ENCODE measurements at regions of chr16 and their contacts with region 1.

Region 1: DNA sequence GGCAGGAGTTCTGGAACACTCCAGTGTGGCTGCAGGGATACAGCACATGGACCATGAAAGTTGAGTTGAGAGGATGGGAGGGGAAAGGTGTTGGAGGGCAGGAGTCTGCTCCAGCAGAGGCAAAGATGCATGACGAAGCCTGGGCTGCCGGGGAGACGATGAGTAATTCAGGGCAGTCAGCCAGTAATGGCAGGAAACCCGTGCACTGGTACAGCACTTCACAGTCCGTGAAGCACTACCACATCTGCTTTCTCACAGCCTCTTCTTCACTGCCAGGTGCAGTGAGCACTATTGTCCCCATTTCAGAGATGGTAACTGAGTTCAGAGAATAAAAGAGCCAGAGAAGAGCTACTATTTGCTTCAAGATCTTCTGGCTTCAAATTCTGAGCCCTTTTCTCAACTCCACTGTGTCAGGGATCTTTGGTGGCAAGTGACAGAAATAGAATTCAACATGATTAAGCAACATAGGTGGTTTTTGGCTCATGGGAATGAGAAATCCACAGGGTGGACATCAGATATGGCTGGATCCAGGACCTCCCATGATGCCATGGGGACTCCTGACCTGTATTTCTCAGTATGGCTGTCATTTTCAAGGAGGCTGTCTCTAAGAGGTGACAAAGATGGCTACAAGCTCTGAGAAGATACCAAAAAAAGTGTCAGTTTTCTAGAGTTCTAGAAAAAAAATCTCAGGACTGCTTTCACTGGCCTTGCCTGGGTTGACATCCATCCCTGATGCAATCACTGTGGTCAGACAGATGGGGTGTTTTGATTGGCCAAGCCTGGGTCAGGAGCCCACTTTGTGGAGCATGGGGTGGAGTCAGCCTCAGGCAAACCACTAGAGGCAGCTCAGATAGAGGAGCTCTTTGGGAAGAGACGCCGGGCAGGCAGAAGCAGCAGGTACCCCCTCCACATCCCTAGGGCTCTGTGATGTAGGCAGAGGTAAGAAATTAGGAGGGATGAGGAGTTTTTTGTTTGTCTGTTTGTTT is 24.7 kb downstream of the IL21R start:
- DNase-seq: peak in 8 of 9 experiments; percentile 67 to 89 (median 81)
- ATAC-seq: peak; percentile 87
- H3K4me3 ChIP-seq: no peak overlapping the region
- H3K4me3 Mint-ChIP-seq: no peak overlapping the region
- H3K27ac ChIP-seq: peak overlapping the region in 1 of 2 experiments; percentile 69
- H3K27ac Mint-ChIP-seq: peak overlapping the region; percentile 69
- H3K4me1 ChIP-seq: peaks cover 22% of the 10 kb centered on the region
- H3K4me1 Mint-ChIP-seq: peaks cover 57% of the 10 kb centered on the region
- H3K27me3 ChIP-seq: no peaks in the 10 kb centered on the region
- H3K27me3 Mint-ChIP-seq: no peaks in the 10 kb centered on the region
- CTCF ChIP-seq: no peak

Region 2: DNA sequence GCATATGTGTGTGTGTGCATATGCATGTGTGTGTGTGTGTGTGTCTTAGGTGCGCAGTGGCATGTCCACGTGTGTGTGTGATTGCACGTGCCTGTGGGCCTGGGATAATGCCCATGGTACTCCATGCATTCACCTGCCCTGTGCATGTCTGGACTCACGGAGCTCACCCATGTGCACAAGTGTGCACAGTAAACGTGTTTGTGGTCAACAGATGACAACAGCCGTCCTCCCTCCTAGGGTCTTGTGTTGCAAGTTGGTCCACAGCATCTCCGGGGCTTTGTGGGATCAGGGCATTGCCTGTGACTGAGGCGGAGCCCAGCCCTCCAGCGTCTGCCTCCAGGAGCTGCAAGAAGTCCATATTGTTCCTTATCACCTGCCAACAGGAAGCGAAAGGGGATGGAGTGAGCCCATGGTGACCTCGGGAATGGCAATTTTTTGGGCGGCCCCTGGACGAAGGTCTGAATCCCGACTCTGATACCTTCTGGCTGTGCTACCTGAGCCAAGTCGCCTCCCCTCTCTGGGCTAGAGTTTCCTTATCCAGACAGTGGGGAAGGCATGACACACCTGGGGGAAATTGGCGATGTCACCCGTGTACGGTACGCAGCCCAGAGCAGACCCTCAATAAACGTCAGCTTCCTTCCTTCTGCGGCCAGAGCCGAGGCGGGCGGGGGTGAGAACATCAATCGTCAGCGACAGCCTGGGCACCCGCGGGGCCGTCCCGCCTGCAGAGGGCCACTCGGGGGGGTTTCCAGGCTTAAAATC is 22.9 kb after region 1 on chr16:
- CTCF ChIA-PET with region 1: interaction called, 3 read pairs
- POLR2A ChIA-PET with region 1: interaction called, 4 read pairs
- intact Hi-C with region 1: loop called in 1 of 2 experiments (anchors 1 kb)
- DNase-seq: peak; percentile 63 to 97 (median 80)
- ATAC-seq: peak; percentile 60
- H3K4me3 ChIP-seq: peak overlapping the region; percentile 17 to 26
- H3K4me3 Mint-ChIP-seq: peak overlapping the region; percentile 70
- H3K27ac ChIP-seq: peak overlapping the region; percentile 60 to 91
- H3K27ac Mint-ChIP-seq: peak overlapping the region; percentile 99
- H3K4me1 ChIP-seq: peaks cover 68% of the 10 kb centered on the region
- H3K4me1 Mint-ChIP-seq: peaks cover 87% of the 10 kb centered on the region
- H3K27me3 ChIP-seq: no peaks in the 10 kb centered on the region
- H3K27me3 Mint-ChIP-seq: no peaks in the 10 kb centered on the region
- CTCF ChIP-seq: no peak

Measured in CD8-positive, alpha-beta T cell (primary cell).